CD8-positive, alpha-beta memory T cell (primary cell): ENCODE measurements at regions of chr1 and their contacts with region 1.

Region 1: DNA sequence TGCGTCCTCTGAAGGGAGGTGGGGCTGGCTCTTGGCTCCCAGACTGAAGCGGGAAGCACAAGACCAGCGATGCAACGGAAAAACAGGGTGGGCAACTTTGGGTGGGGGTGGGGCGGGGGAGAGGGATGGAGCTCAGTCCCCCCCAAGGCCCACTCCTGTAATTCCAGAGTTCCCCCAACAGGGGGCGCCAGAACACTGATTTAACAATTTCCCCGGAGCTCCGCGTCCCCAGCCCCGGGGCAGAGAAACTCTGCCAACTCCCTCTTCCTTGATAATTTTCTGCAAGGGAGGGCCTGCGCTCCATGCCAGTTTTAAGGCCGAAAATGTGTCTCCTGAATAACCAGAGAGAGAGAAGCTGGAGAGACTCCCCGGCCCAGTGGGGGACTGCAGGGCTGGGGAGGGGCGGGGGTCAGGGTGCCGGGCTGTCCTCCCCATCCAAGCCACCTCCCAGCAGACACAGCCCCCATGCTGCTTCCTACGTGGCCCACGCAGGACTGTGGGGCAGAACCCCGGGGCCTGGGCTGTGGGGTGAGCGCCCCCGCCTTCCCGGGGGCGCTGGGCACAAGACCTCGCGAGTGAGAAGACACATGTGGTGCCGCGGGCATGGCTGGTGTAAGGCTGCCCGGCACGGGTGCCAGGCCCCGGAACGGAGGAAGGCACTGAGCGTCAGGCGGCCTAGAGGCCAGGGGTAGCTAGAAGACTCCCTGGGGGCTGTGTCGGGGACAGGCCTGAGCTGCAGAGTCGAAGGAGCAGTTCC is 51.4 kb downstream of the KIF21B start:
- DNase-seq: peak; percentile 31 to 78 (median 51)
- H3K4me3 ChIP-seq: no peak overlapping the region
- H3K4me3 Mint-ChIP-seq: no peak overlapping the region
- H3K27ac ChIP-seq: no peak overlapping the region
- H3K27ac Mint-ChIP-seq: peak overlapping the region in 1 of 8 donors; percentile 58
- H3K4me1 ChIP-seq: no peaks in the 10 kb centered on the region
- H3K4me1 Mint-ChIP-seq: peaks cover 5 to 15% (median 8%) of the 10 kb centered on the region in 3 donors
- H3K27me3 ChIP-seq: no peaks in the 10 kb centered on the region
- H3K27me3 Mint-ChIP-seq: no peaks in the 10 kb centered on the region

Region 2: GRCh38 chr1:200811704-200812103 is 160.4 kb before region 1 on chr1:
- CTCF ChIA-PET with region 1: no interaction called
- POLR2A ChIA-PET with region 1: no interaction called
- DNase-seq: no peak
- H3K4me3 ChIP-seq: no peak overlapping the region
- H3K4me3 Mint-ChIP-seq: no peak overlapping the region
- H3K27ac ChIP-seq: no peak overlapping the region
- H3K27ac Mint-ChIP-seq: no peak overlapping the region
- H3K4me1 ChIP-seq: no peaks in the 10 kb centered on the region
- H3K4me1 Mint-ChIP-seq: no peaks in the 10 kb centered on the region
- H3K27me3 ChIP-seq: no peaks in the 10 kb centered on the region
- H3K27me3 Mint-ChIP-seq: peaks cover 1 to 9% of the 10 kb centered on the region in 2 donors

Region 3: GRCh38 chr1:200992382-200993048 is 20.4 kb after region 1 on chr1:
- CTCF ChIA-PET with region 1: interaction called, 15 read pairs
- POLR2A ChIA-PET with region 1: no interaction called
- DNase-seq: no peak
- H3K4me3 ChIP-seq: no peak overlapping the region
- H3K4me3 Mint-ChIP-seq: no peak overlapping the region
- H3K27ac ChIP-seq: no peak overlapping the region
- H3K27ac Mint-ChIP-seq: peak overlapping the region in 1 of 8 donors; percentile 36
- H3K4me1 ChIP-seq: no peaks in the 10 kb centered on the region
- H3K4me1 Mint-ChIP-seq: peaks cover 0 to 7% (median 3%) of the 10 kb centered on the region in 3 donors
- H3K27me3 ChIP-seq: no peaks in the 10 kb centered on the region
- H3K27me3 Mint-ChIP-seq: no peaks in the 10 kb centered on the region

Region 4: DNA sequence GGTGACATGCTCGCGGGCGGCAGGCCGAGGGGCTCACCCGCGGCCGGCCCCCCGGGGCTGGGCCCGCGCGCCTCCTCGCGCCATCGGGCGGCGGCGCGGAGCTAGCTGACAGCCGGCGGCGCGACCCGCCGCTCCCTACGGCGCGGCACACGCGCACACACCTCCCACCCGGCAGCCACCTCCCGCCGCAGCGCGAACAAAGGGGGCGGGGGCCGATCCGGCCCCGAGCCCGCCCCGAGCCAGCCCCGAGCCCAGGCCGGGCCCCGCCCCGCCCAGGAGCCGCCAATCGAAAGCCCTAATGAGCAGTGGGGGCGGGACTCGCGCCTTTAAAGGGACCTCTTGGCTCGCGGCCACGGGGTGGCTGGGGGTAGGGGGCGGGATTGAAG is 51.4 kb after region 1 on chr1 and contains the start of gene KIF21B:
- CTCF ChIA-PET with region 1: interaction called, 63 read pairs
- POLR2A ChIA-PET with region 1: interaction called, 3 read pairs
- DNase-seq: peak; percentile 88 to 94 (median 91)
- H3K4me3 ChIP-seq: peak within 1 kb of the TSS; percentile 92
- H3K4me3 Mint-ChIP-seq: peak within 1 kb of the TSS; percentile 92 to 99 (median 97)
- H3K27ac ChIP-seq: peak within 1 kb of the TSS; percentile 73
- H3K27ac Mint-ChIP-seq: peak within 1 kb of the TSS; percentile 90 to 100 (median 96)
- H3K4me1 ChIP-seq: peaks cover 59% of the 10 kb centered on the region
- H3K4me1 Mint-ChIP-seq: peaks cover 53 to 78% (median 60%) of the 10 kb centered on the region in 3 donors
- H3K27me3 ChIP-seq: no peaks in the 10 kb centered on the region
- H3K27me3 Mint-ChIP-seq: peaks cover 0 to 2% of the 10 kb centered on the region in 2 donors
- total RNA-seq, gene KIF21B: 37.5 to 37.6 TPM

Region 5: GRCh38 chr1:201042779-201043461 is 70.8 kb after region 1 on chr1:
- CTCF ChIA-PET with region 1: interaction called, 160 read pairs
- POLR2A ChIA-PET with region 1: no interaction called
- DNase-seq: peak; percentile 48 to 79 (median 58)
- H3K4me3 ChIP-seq: no peak overlapping the region
- H3K4me3 Mint-ChIP-seq: no peak overlapping the region
- H3K27ac ChIP-seq: no peak overlapping the region
- H3K27ac Mint-ChIP-seq: peak overlapping the region in 2 of 8 donors; percentile 29 to 51
- H3K4me1 ChIP-seq: no peaks in the 10 kb centered on the region
- H3K4me1 Mint-ChIP-seq: peaks cover 3 to 5% (median 4%) of the 10 kb centered on the region in 3 donors
- H3K27me3 ChIP-seq: no peaks in the 10 kb centered on the region
- H3K27me3 Mint-ChIP-seq: peaks cover 0 to 2% of the 10 kb centered on the region in 2 donors

Region 6: DNA sequence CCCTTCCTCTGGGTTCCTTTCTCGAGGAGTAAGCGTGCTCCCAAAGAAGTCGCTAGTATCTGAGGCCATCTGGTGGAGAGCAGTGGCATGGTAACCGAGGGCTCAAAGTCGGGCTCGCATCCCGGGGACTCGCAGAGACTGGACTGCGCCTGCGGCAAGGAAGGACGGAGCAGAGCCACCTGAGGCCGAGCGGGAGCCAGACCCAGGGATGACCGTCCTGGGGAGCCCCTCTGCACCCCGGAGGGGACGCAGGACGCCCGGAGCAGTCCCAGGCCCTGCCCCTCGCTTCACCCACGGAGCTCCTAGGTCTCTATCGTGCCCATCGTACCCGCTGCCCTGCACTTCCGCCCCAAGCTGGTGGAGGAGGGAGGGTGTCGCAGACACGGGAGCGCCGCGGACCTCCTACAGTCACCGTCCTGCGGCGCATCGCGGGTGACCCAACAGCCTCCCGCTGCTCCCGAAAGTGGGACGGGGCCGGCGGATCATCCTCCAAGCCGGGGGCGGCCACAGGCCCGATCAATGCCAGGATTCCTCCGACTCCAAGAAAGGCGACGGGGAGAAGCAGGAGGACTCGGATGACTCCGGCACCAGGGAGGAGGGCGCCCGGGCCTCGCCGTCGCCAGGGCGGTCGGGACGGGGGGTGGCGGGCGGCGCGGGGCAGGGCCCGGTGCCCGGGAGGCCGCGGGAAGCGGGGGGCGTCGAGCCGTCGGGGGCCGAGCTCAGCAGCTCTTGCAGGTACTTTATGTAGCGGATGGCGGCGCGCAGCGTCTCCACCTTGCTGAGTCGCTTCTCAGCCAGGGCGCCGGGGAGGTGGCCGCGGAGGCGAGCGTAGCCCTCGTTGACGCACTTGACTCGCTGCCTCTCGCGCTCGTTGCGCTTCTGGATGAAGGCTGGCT is 142.4 kb after region 1 on chr1:
- CTCF ChIA-PET with region 1: interaction called, 26 read pairs
- POLR2A ChIA-PET with region 1: no interaction called
- DNase-seq: peak; percentile 46 to 78 (median 63)
- H3K4me3 ChIP-seq: peak overlapping the region; percentile 92
- H3K4me3 Mint-ChIP-seq: peak overlapping the region; percentile 84 to 97 (median 92)
- H3K27ac ChIP-seq: peak overlapping the region; percentile 47
- H3K27ac Mint-ChIP-seq: peak overlapping the region in 7 of 8 donors; percentile 72 to 94 (median 85)
- H3K4me1 ChIP-seq: peaks cover 9% of the 10 kb centered on the region
- H3K4me1 Mint-ChIP-seq: peaks cover 9 to 28% (median 25%) of the 10 kb centered on the region in 3 donors
- H3K27me3 ChIP-seq: no peaks in the 10 kb centered on the region
- H3K27me3 Mint-ChIP-seq: peaks cover 0 to 1% of the 10 kb centered on the region in 2 donors